ENCODE measurements at regions of chr10 and their contacts with region 1.

Region 1: GRCh38 chr10:100448951-100449350 is 13.9 kb upstream of the WNT8B start:
- DNase-seq: no peak
- H3K4me3 ChIP-seq: no peak overlapping the region
- H3K27ac ChIP-seq: no peak overlapping the region
- H3K4me1 ChIP-seq: no peaks in the 10 kb centered on the region
- H3K27me3 ChIP-seq: peaks cover 0 to 4% of the 10 kb centered on the region in 2 donors
- CTCF ChIP-seq: no peak
- POLR2A ChIP-seq: no peak

Region 2: DNA sequence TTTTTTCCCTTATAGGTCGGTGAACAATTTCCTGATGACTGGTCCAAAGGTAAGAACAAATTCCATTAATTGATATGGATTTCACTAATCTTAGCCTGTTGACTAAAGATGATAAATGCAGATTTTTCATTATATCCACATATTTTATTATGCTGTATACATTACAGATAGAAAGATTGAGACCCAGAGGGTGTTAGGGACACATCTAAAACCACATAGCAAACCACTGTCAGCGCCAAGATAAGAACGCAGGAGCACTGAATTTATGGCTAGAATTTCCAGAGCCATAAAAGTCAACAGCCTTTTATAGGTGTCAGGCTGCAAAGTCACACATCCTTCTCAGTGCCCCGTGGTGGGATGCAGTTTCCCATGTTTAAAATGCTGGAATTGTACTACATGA is 30.1 kb after region 1 on chr10:
- intact Hi-C with region 1: loop called (anchors 2 kb)
- DNase-seq: no peak
- H3K4me3 ChIP-seq: no peak overlapping the region
- H3K27ac ChIP-seq: no peak overlapping the region
- H3K4me1 ChIP-seq: no peaks in the 10 kb centered on the region
- H3K27me3 ChIP-seq: peaks cover 0 to 13% of the 10 kb centered on the region in 2 donors
- CTCF ChIP-seq: no peak
- POLR2A ChIP-seq: no peak